GM12878 (cell line): ENCODE measurements at regions of chr3 and their contacts with region 1.

Region 1: GRCh38 chr3:42572278-42572677 is 9.5 kb downstream of the SEC22C start:
- DNase-seq: no peak
- ATAC-seq: peak; percentile 96
- H3K4me3 ChIP-seq: no peak overlapping the region
- H3K27ac ChIP-seq: no peak overlapping the region
- H3K4me1 ChIP-seq: no peaks in the 10 kb centered on the region
- H3K27me3 ChIP-seq: no peaks in the 10 kb centered on the region
- CTCF ChIP-seq: peak; percentile 62 to 72 (median 69)
- EP300 ChIP-seq: no peak
- POLR2A ChIP-seq: no peak
- RAD21 ChIP-seq: peak; percentile 57

Region 2: GRCh38 chr3:42264399-42265058 is 307.7 kb before region 1 on chr3:
- CTCF ChIA-PET with region 1: no interaction called
- POLR2A ChIA-PET with region 1: no interaction called
- RAD21 ChIA-PET with region 1: no interaction called
- SMC1A ChIA-PET with region 1: no interaction called
- in situ Hi-C with region 1: no loop called
- intact Hi-C with region 1: no loop called
- DNase-seq: no peak
- ATAC-seq: no peak
- H3K4me3 ChIP-seq: no peak overlapping the region
- H3K27ac ChIP-seq: no peak overlapping the region
- H3K4me1 ChIP-seq: no peaks in the 10 kb centered on the region
- H3K27me3 ChIP-seq: peaks cover 3 to 18% of the 10 kb centered on the region in 2 experiments; a peak in 3 of 4 replicates
- CTCF ChIP-seq: no peak
- EP300 ChIP-seq: no peak
- POLR2A ChIP-seq: no peak
- RAD21 ChIP-seq: no peak

Region 3: DNA sequence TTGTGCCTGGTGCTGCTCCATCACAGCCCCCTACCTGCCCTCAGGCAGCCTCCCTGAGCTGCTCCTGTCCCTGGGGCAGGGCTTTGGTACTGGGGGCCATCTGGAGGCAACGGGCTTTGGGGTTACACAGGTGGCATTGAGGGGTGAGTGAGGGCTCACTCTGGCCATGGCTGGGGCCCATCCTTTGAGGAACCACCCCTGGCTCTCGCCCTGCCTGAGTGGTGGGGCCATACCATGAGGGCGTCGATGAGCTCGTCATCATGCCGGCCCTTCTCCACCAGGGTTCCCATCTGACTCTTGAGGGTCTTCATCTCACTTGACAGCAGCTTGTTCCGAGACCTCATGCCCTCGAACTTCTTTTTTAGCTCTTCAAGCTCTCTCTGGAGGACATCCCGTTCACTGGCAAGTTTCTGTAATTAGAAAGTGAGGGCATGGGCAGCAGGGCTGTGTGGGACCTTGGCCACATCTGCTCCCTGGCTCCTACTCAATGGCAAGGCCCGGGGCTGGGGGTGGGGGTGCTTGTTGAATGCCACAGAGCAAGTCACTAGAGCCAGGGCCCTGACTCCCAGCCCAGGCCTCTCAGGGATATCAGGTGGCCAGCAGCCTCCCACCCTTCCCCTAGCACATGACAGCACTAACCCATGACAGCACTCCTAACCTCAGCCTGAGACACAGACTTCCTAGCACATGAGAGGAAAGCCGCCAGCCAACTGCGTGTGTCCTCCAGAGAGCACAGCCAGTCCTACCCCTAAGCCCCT is 167.3 kb after region 1 on chr3:
- CTCF ChIA-PET with region 1: interaction called, 16 read pairs
- POLR2A ChIA-PET with region 1: no interaction called
- RAD21 ChIA-PET with region 1: no interaction called
- SMC1A ChIA-PET with region 1: interaction called, 10 read pairs
- in situ Hi-C with region 1: loop called (anchors 10 kb)
- intact Hi-C with region 1: loop called (anchors 5 kb)
- DNase-seq: no peak
- ATAC-seq: no peak
- H3K4me3 ChIP-seq: no peak overlapping the region
- H3K27ac ChIP-seq: no peak overlapping the region
- H3K4me1 ChIP-seq: no peaks in the 10 kb centered on the region
- H3K27me3 ChIP-seq: no peaks in the 10 kb centered on the region
- CTCF ChIP-seq: no peak
- EP300 ChIP-seq: no peak
- POLR2A ChIP-seq: no peak
- RAD21 ChIP-seq: no peak

Region 4: DNA sequence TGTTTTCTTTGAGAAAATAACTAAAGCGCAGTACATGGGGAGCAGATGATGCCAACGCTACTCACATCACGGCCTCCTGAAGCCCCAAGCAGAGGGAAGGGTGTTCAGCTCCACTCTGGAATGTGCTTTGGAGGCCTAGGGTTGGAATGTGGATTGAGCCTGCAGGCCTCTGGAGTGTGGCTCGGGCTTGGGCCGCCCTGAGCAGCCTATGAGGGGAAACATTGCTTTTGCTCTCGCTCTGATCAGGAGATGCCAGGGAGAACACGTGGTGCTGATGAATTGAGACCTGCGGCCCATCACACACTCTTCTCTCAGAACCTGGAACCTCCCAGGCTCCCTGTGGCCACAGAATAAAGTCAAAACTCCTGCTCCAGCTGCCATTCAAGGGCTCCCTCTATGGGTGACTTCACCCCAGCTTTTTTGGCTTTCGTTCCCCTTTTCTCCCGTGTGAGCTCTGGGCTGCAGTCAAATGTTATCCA is 177.5 kb after region 1 on chr3:
- CTCF ChIA-PET with region 1: interaction called, 16 read pairs
- POLR2A ChIA-PET with region 1: no interaction called
- RAD21 ChIA-PET with region 1: no interaction called
- SMC1A ChIA-PET with region 1: interaction called, 10 read pairs
- in situ Hi-C with region 1: loop called (anchors 10 kb)
- intact Hi-C with region 1: loop called (anchors 5 kb)
- DNase-seq: no peak
- ATAC-seq: peak; percentile 59
- H3K4me3 ChIP-seq: no peak overlapping the region
- H3K27ac ChIP-seq: no peak overlapping the region
- H3K4me1 ChIP-seq: no peaks in the 10 kb centered on the region
- H3K27me3 ChIP-seq: no peaks in the 10 kb centered on the region
- CTCF ChIP-seq: peak; percentile 43 to 54 (median 53); a peak in 5 of 6 replicates
- EP300 ChIP-seq: no peak
- POLR2A ChIP-seq: no peak
- RAD21 ChIP-seq: peak; percentile 46